ENCODE measurements at regions of chr3 and their contacts with region 1.

Region 1: GRCh38 chr3:50337191-50337841 is 3.3 kb downstream of the RASSF1 start:
- DNase-seq: peak; percentile 97
- ATAC-seq: peak; percentile 86
- H3K4me3 ChIP-seq: peak overlapping the region; percentile 72 to 89
- H3K27ac ChIP-seq: peak overlapping the region; percentile 82
- H3K4me1 ChIP-seq: peaks cover 29 to 69% of the 10 kb centered on the region in 2 experiments
- H3K27me3 ChIP-seq: no peaks in the 10 kb centered on the region
- CTCF ChIP-seq: no peak
- POLR2A ChIP-seq: no peak
- RAD21 ChIP-seq: no peak

Region 2: DNA sequence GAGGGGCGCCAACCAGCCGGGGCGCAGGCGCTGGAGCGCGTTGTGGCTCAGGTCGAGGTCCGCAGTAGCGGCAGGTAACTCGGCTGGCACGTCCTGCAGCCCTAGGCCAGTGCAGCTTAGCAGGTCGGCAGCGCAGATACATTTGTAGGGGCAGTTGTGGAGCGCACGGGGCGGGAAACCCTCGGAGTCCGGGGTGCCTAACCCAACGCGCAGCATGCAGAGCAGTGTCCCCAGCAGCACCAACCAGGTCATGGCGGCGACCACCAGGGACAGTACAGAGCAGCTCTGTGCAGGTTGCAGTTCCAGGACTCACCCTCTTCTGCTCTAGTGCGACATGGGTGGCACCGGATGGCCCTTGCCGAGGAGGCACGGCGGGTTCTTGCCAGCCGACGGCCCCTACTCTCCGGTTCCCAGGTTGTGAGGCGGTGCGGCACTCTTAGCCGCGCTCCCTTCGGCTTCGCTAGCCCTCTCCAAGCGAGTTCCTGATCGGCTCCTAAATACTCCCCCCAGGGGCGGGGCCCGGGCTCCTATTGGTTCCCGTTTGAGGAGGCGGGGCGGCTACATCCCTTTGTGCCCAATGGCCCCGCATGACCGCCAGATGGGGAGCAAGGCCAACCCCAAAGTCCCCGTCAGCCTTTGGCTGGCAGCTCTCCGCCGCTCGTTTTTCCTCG is 618.0 kb before region 1 on chr3 and contains the start of gene AMIGO3:
- CTCF ChIA-PET with region 1: no interaction called
- POLR2A ChIA-PET with region 1: no interaction called
- RAD21 ChIA-PET with region 1: no interaction called
- intact Hi-C with region 1: no loop called
- DNase-seq: peak; percentile 61
- ATAC-seq: peak; percentile 71
- H3K4me3 ChIP-seq: peak within 1 kb of the TSS; percentile 39 to 52
- H3K27ac ChIP-seq: peak within 1 kb of the TSS; percentile 39; the same call in 1 of the 2 replicates
- H3K4me1 ChIP-seq: peaks cover 8 to 27% of the 10 kb centered on the region in 2 experiments; a peak in 3 of 4 replicates
- H3K27me3 ChIP-seq: no peaks in the 10 kb centered on the region
- CTCF ChIP-seq: peak in 2 of 3 experiments; percentile 38 to 57; a peak in 4 of 6 replicates
- POLR2A ChIP-seq: peak; percentile 74
- RAD21 ChIP-seq: no peak
- total RNA-seq, gene AMIGO3: 0.32 TPM

Region 3: GRCh38 chr3:50321336-50322114 is 15.8 kb before region 1 on chr3:
- CTCF ChIA-PET with region 1: interaction called, 14 read pairs
- POLR2A ChIA-PET with region 1: interaction called, 8 read pairs
- RAD21 ChIA-PET with region 1: interaction called in 1 of 2 experiments, 3 read pairs
- intact Hi-C with region 1: no loop called
- DNase-seq: peak; percentile 84
- ATAC-seq: peak; percentile 66
- H3K4me3 ChIP-seq: peak overlapping the region; percentile 64 to 92
- H3K27ac ChIP-seq: peak overlapping the region; percentile 93
- H3K4me1 ChIP-seq: peaks cover 49 to 76% of the 10 kb centered on the region in 2 experiments
- H3K27me3 ChIP-seq: no peaks in the 10 kb centered on the region
- CTCF ChIP-seq: peak in 2 of 3 experiments; percentile 70 to 71; a peak in 4 of 6 replicates
- POLR2A ChIP-seq: peak; percentile 79
- RAD21 ChIP-seq: no peak

Region 4: GRCh38 chr3:50350527-50351322 is 13.4 kb after region 1 on chr3 and contains the starts of genes CYB561D2 and NPRL2:
- CTCF ChIA-PET with region 1: interaction called, 24 read pairs
- POLR2A ChIA-PET with region 1: interaction called, 21 read pairs
- RAD21 ChIA-PET with region 1: no interaction called
- intact Hi-C with region 1: no loop called
- DNase-seq: peak; percentile 89
- ATAC-seq: peak; percentile 92
- H3K4me3 ChIP-seq: peak within 1 kb of the TSS; percentile 73 to 83
- H3K27ac ChIP-seq: peak within 1 kb of the TSS; percentile 70
- H3K4me1 ChIP-seq: peaks cover 6 to 37% of the 10 kb centered on the region in 2 experiments
- H3K27me3 ChIP-seq: no peaks in the 10 kb centered on the region
- CTCF ChIP-seq: no peak
- POLR2A ChIP-seq: peak; percentile 78
- RAD21 ChIP-seq: no peak
- total RNA-seq, gene CYB561D2: 9.5 TPM
- total RNA-seq, gene NPRL2: 35.4 TPM